Thyroid gland (tissue), 4 donors: ENCODE measurements at regions of chr12 and their contacts with region 1.

Region 1: DNA sequence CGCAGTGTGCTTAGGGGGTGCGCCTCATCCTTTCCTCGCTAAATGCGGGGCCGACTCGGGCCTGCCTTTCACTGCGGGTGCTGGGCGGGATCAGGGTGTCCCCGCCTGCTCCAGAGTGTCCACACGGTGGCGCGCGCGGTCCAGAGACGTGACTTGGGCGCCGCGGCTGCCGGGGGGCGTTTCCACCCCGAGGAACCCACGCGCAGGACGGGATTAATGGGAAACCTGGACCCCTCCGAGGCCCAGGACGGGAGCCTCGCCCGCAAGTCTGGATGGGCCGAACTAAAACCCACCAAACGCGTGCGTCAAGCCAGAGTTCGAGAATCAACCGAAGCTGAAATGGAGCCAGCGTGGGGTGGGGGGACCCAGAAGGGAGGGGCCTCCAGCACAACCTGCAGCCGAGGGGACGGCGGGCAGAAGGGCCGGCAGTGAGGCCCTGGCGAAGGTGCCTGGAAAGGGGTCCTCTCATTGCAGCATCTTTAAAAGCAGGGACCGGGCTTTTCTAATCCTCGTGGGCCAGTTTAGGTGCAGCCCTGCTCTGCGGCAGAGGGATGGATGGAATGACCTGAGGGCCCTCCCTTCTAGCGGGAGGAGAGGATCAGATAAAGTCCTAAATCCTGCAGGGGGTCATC is 93.3 kb downstream of the NINJ2 start:
- DNase-seq: peak; percentile 77 to 82
- H3K4me3 ChIP-seq: peak overlapping the region in 1 of 3 donors; percentile 37
- H3K27ac ChIP-seq: peak overlapping the region in 2 of 3 donors; percentile 52 to 79
- H3K4me1 ChIP-seq: peaks cover 8 to 26% of the 10 kb centered on the region in 2 donors
- H3K27me3 ChIP-seq: peaks cover 3% of the 10 kb centered on the region
- CTCF ChIP-seq: peak; percentile 79 to 93 (median 86)
- POLR2A ChIP-seq: no peak

Region 2: DNA sequence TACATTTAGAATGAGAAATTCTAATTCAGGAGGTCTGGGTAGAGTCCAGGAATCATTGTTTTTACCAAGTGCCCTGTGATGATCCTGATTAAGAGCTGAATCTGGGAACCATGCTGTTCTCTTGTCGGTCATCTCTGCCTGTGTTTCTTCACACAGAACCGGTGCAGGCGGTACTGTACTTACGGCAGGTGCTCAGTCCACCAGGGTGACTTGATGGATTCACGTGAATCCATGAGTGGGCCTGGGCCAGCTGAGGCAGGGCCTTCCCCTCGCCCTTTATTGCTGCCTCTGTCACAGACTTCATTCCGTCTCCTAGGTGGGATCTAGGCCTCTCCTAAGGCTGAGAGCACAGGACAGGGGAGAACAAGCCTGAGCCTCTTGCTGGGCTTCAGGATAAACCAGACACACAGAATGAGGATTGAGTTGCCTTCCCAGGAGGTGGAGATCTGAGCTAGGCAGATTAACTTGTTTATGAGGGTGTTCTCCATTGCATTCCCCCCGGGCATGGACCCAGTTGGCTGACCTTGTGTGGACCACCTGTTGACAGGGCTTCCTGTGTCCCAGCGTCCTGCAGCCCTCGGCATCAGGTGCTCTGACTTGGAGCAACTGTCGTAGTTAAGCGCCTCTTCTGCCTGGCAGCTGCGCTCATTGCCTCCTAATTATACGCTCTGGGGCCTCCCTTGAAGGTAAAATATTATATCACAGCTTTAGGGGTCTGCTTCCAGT is 68.0 kb before region 1 on chr12:
- intact Hi-C with region 1: no loop called
- DNase-seq: no peak
- H3K4me3 ChIP-seq: no peak overlapping the region
- H3K27ac ChIP-seq: peak overlapping the region in 1 of 3 donors; percentile 46
- H3K4me1 ChIP-seq: peaks cover 15 to 19% of the 10 kb centered on the region in 2 donors
- H3K27me3 ChIP-seq: no peaks in the 10 kb centered on the region
- CTCF ChIP-seq: no peak
- POLR2A ChIP-seq: no peak

Region 3: GRCh38 chr12:751192-751998 is 181.5 kb after region 1 on chr12:
- intact Hi-C with region 1: loop called (anchors 5 kb)
- DNase-seq: peak; percentile 88
- H3K4me3 ChIP-seq: peak overlapping the region in 2 of 3 donors; percentile 6 to 96
- H3K27ac ChIP-seq: peak overlapping the region; percentile 66 to 98 (median 72)
- H3K4me1 ChIP-seq: peaks cover 17 to 19% of the 10 kb centered on the region in 2 donors
- H3K27me3 ChIP-seq: no peaks in the 10 kb centered on the region
- CTCF ChIP-seq: peak in 5 of 6 experiments; percentile 39 to 72 (median 62)
- POLR2A ChIP-seq: peak in 1 of 2 donors; percentile 63

Region 4: GRCh38 chr12:810671-811415 is 240.9 kb after region 1 on chr12:
- intact Hi-C with region 1: loop called (anchors 5 kb)
- DNase-seq: no peak
- H3K4me3 ChIP-seq: no peak overlapping the region
- H3K27ac ChIP-seq: no peak overlapping the region
- H3K4me1 ChIP-seq: peaks cover 7 to 15% of the 10 kb centered on the region in 2 donors
- H3K27me3 ChIP-seq: no peaks in the 10 kb centered on the region
- CTCF ChIP-seq: no peak
- POLR2A ChIP-seq: no peak

Region 5: DNA sequence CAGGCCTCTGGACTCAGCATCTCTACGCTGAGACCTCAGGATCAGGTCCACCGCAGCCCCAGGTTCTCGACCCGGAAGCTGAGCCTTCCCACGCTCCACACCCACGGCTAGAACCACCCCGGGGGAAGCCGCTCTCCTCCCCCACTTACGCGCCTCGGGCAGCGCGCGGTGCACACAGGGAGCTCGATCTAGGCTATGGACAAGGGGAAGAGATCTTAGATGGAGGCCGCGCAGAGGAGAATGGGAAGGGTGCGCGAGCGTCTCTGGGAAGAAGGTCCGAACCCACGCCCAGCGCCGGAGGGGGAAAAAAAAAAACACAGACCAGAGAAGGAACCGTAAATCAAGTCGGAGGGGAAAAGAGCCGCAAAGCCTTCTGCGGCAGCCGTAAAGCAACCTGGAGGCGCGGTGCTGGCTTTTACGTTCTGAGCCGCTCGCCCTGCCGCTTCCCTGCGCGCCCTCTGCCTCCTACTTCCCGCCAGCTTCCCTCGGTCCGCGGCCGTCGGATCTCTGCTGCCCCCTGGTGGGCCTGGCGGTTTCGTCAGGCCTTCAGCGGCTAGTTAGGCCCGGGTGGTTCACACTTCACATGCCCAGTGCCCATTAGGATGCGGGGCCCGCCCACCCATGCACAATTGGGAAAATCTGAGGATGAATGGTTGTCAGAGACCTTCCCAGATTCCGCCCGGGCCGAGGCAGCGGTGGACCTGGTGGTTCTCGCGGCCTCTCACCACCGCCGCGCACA is 379.7 kb after region 1 on chr12 and contains the start of gene RAD52:
- intact Hi-C with region 1: loop called (anchors 5 kb)
- DNase-seq: peak; percentile 97 to 98
- H3K4me3 ChIP-seq: peak within 1 kb of the TSS; percentile 29 to 67 (median 49)
- H3K27ac ChIP-seq: peak within 1 kb of the TSS; percentile 65 to 92 (median 74)
- H3K4me1 ChIP-seq: peaks cover 4 to 21% of the 10 kb centered on the region in 2 donors
- H3K27me3 ChIP-seq: no peaks in the 10 kb centered on the region
- CTCF ChIP-seq: peak; percentile 94 to 99 (median 97)
- POLR2A ChIP-seq: peak; percentile 21 to 83
- total RNA-seq, gene RAD52: 27.4 to 35.1 (median 31.0) TPM

Region 6: DNA sequence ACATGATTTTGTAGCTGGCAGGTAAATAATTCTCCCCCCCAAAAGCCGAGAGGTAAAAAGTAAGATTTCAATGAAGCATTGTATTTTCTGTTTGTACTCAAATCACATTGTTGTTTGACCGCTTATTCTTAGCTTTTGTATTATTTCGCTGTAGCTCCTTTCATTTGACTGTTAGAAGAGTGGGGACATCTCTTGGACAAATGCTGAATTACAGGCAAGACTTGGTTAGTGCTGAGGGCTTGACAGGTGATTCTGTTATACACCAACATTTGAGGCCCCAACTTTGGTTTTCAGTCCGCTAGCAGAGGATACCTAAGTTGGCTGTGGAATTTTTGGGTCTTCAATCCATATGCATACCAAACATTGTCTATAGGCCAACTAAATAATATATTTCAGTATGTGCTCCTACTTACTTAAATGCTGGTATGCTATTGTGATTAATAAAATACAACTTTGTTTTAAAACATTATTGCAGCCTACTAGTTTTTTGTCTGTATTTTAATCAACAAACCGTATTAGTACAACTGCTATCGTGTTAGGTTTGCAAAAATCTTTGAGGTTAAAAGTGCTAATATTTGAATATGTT is 523.3 kb after region 1 on chr12:
- intact Hi-C with region 1: loop called (anchors 10 kb)
- DNase-seq: no peak
- H3K4me3 ChIP-seq: no peak overlapping the region
- H3K27ac ChIP-seq: no peak overlapping the region
- H3K4me1 ChIP-seq: peaks cover 3 to 9% of the 10 kb centered on the region in 2 donors
- H3K27me3 ChIP-seq: no peaks in the 10 kb centered on the region
- CTCF ChIP-seq: peak in 4 of 6 experiments; percentile 61 to 74 (median 72)
- POLR2A ChIP-seq: no peak